ENCODE measurements at regions of chr12 and their contacts with region 1.

Region 1: GRCh38 chr12:45388545-45388944 is 172.7 kb downstream of the ANO6 start:
- DNase-seq: no peak
- H3K4me3 ChIP-seq: no peak overlapping the region
- H3K27ac ChIP-seq: no peak overlapping the region
- H3K4me1 ChIP-seq: no peaks in the 10 kb centered on the region
- H3K27me3 ChIP-seq: no peaks in the 10 kb centered on the region
- CTCF ChIP-seq: peak; percentile 45 to 67 (median 60)
- EP300 ChIP-seq: no peak
- POLR2A ChIP-seq: no peak

Region 2: GRCh38 chr12:45170456-45171042 is 218.0 kb before region 1 on chr12:
- intact Hi-C with region 1: loop called (anchors 2 kb)
- DNase-seq: peak; percentile 87
- H3K4me3 ChIP-seq: no peak overlapping the region
- H3K27ac ChIP-seq: no peak overlapping the region
- H3K4me1 ChIP-seq: no peaks in the 10 kb centered on the region
- H3K27me3 ChIP-seq: no peaks in the 10 kb centered on the region
- CTCF ChIP-seq: peak; percentile 56 to 86 (median 78)
- EP300 ChIP-seq: no peak
- POLR2A ChIP-seq: no peak

Region 3: DNA sequence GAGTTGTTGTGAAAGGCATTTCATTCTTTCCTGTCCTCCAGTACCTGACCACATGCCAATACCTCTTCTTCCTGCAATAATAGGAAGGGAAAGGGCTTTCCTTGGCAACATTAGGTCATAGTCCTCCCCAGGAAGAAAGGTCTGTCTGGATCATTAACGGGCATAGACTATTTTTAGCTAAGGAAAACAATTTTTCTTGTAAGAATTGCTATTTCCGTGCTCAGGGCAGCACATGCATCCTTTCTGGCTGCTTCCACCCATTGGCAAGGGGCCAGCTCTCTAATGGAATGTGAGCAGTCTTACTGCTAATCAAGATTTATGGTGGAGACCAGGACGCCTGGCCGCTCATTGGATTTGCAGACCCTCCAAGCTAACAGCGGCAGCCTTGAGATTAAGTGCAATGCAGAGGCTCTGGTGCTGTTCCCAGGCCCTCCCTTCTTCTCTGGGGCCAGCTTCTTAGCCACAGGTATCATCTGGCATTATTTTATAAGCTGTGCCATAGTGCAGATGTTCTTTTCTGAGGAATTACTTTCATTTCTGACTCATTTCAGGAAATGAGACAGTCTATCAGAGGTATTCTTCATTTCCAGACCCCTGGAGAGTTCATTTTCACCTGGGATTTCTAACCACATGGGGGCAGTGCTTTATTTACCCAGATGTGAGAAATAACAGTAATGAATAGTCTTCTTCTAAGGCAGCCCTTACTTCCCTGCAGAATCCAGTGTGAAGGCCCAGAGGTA is 119.7 kb before region 1 on chr12:
- intact Hi-C with region 1: loop called (anchors 5 kb)
- DNase-seq: peak; percentile 86
- H3K4me3 ChIP-seq: peak overlapping the region in 1 of 4 donors; percentile 16
- H3K27ac ChIP-seq: peak overlapping the region; percentile 42 to 81 (median 64)
- H3K4me1 ChIP-seq: peaks cover 0 to 65% (median 52%) of the 10 kb centered on the region in 4 donors
- H3K27me3 ChIP-seq: no peaks in the 10 kb centered on the region
- CTCF ChIP-seq: peak in 3 of 4 experiments; percentile 35 to 47 (median 35)
- EP300 ChIP-seq: no peak
- POLR2A ChIP-seq: no peak

Region 4: DNA sequence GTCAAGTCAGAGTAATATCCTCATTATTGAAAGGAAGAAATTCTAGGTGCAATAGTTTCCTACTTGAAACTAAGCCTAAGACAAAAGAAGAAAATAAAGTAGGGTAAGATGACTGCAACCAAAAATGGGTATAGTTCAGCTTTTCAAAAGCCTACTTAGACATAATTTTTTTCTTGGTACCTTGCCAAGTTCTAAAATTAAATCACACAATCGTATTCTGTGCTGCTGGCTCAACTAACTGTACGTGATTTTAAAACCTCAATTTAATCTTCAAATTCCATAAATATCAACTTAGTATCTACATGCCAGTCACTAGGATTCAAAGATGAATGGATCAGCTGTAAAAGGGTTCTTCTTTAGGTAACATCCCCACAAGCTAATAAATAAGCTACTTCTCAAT is 545.0 kb after region 1 on chr12:
- intact Hi-C with region 1: no loop called
- DNase-seq: no peak
- H3K4me3 ChIP-seq: no peak overlapping the region
- H3K27ac ChIP-seq: peak overlapping the region in 1 of 4 donors; percentile 57
- H3K4me1 ChIP-seq: peaks cover 0 to 18% (median 16%) of the 10 kb centered on the region in 4 donors
- H3K27me3 ChIP-seq: no peaks in the 10 kb centered on the region
- CTCF ChIP-seq: no peak
- EP300 ChIP-seq: no peak
- POLR2A ChIP-seq: no peak